ENCODE measurements at regions of chr10 and their contacts with region 1.

Region 1: GRCh38 chr10:70925377-70926225 is 37.2 kb upstream of the PCBD1 start:
- ATAC-seq: peak; percentile 61 to 95 (median 73)
- H3K4me3 ChIP-seq: no peak overlapping the region
- H3K27ac ChIP-seq: no peak overlapping the region
- H3K4me1 ChIP-seq: peaks cover 35 to 48% of the 10 kb centered on the region in 2 donors

Region 2: DNA sequence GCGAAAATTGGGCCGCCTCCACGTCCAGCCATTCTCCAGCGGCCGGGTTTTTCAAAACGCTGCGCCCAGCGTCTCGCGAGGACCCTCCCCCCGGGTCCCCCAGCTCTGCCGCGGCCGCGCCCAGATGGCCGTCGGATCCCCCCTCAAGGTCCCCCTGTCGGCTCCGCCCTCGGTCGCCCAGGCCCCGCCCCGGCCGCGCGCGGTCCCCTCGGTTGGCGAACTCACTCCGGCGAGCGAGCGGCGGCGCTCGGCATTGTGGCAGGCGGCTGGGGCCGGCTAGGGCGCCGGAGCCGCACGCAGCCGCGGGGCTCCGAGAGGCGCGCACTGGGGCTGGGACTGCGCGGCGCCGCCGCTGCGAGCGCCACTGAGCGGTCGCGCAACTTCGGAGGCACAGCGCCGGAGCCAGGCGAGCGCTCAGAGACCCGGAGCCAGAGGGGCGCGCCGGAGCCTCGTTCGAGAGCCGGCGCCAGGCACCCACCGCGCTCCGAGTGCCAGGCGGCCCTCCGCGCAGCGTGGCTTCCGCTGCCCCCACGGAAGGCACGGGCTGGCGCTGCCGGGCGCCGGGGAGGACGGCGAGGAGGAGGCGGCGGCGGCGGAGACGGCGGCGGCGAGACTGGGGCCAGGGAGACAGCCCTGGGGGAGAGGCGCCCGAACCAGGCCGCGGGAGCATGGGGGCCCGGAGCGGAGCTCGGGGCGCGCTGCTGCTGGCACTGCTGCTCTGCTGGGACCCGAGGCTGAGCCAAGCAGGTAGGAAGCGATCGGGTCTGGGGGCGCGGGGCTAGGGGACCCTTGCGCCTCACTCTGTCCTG is 286.9 kb after region 1 on chr10 and contains the start of gene UNC5B:
- in situ Hi-C with region 1: loop called in 4 of 9 experiments (anchors 10 to 25 kb)
- ATAC-seq: peak; percentile 71 to 94 (median 90)
- H3K4me3 ChIP-seq: peak within 1 kb of the TSS; percentile 59 to 72 (median 64)
- H3K27ac ChIP-seq: peak within 1 kb of the TSS; percentile 63 to 74
- H3K4me1 ChIP-seq: peaks cover 34 to 41% of the 10 kb centered on the region in 2 donors
- total RNA-seq, gene UNC5B: 1.4 to 53.5 (median 18.2) TPM